Mammary epithelial cell (primary cell): ENCODE measurements at regions of chr3 and their contacts with region 1.

Region 1: GRCh38 chr3:33773637-33774036 is 24.8 kb upstream of the PDCD6IP start:
- DNase-seq: no peak
- H3K4me3 ChIP-seq: no peak overlapping the region
- H3K27ac ChIP-seq: no peak overlapping the region
- H3K4me1 ChIP-seq: peaks cover 12% of the 10 kb centered on the region
- H3K27me3 ChIP-seq: no peaks in the 10 kb centered on the region
- CTCF ChIP-seq: no peak

Region 2: DNA sequence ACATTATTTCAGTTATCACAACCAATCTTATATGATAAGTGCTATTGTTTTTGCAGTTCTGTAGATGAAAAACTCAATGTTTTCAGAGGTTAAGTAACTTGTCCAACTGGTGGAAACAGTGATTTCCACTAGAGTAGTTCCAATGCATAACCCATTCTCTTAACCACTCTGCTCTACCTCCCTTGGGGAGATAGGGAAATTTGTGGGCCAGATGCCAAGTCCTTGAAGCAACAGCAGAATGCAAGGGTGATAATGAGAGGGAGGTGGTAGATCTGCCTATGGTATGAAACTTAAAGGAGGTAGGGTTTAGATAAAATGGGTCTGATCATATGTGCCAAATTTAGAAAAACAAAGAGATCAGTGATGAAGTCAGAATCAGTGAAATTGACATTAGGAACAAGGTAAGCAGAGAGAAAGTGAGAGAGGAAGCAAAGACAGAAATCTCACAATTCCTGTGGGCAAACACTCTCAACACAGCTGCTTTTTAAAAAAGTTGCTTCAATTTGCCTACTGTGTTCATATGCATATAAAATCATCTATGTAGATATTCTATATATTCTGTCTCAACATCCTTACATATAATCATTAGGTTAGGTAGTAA is 282.9 kb before region 1 on chr3:
- CTCF ChIA-PET with region 1: interaction called, 12 read pairs
- dilution Hi-C with region 1: no loop called
- in situ Hi-C with region 1: no loop called
- intact Hi-C with region 1: no loop called
- DNase-seq: no peak
- H3K4me3 ChIP-seq: no peak overlapping the region
- H3K27ac ChIP-seq: no peak overlapping the region
- H3K4me1 ChIP-seq: no peaks in the 10 kb centered on the region
- H3K27me3 ChIP-seq: no peaks in the 10 kb centered on the region
- CTCF ChIP-seq: no peak

Region 3: GRCh38 chr3:33563474-33563873 is 210.2 kb before region 1 on chr3:
- CTCF ChIA-PET with region 1: no interaction called
- dilution Hi-C with region 1: no loop called
- in situ Hi-C with region 1: no loop called
- intact Hi-C with region 1: no loop called
- DNase-seq: no peak
- H3K4me3 ChIP-seq: no peak overlapping the region
- H3K27ac ChIP-seq: no peak overlapping the region
- H3K4me1 ChIP-seq: no peaks in the 10 kb centered on the region
- H3K27me3 ChIP-seq: no peaks in the 10 kb centered on the region
- CTCF ChIP-seq: no peak

Region 4: GRCh38 chr3:33636125-33636850 is 137.3 kb before region 1 on chr3:
- CTCF ChIA-PET with region 1: no interaction called
- dilution Hi-C with region 1: loop called (anchors 25 kb)
- in situ Hi-C with region 1: no loop called
- intact Hi-C with region 1: loop called (anchors 1 kb)
- DNase-seq: peak; percentile 37
- H3K4me3 ChIP-seq: no peak overlapping the region
- H3K27ac ChIP-seq: no peak overlapping the region
- H3K4me1 ChIP-seq: no peaks in the 10 kb centered on the region
- H3K27me3 ChIP-seq: no peaks in the 10 kb centered on the region
- CTCF ChIP-seq: peak; percentile 45 to 61

Region 5: GRCh38 chr3:34046154-34046553 is 272.5 kb after region 1 on chr3:
- CTCF ChIA-PET with region 1: no interaction called
- dilution Hi-C with region 1: no loop called
- in situ Hi-C with region 1: no loop called
- intact Hi-C with region 1: no loop called
- DNase-seq: no peak
- H3K4me3 ChIP-seq: no peak overlapping the region
- H3K27ac ChIP-seq: no peak overlapping the region
- H3K4me1 ChIP-seq: no peaks in the 10 kb centered on the region
- H3K27me3 ChIP-seq: no peaks in the 10 kb centered on the region
- CTCF ChIP-seq: no peak